ENCODE measurements at regions of chr9 and their contacts with region 1.

Region 1: DNA sequence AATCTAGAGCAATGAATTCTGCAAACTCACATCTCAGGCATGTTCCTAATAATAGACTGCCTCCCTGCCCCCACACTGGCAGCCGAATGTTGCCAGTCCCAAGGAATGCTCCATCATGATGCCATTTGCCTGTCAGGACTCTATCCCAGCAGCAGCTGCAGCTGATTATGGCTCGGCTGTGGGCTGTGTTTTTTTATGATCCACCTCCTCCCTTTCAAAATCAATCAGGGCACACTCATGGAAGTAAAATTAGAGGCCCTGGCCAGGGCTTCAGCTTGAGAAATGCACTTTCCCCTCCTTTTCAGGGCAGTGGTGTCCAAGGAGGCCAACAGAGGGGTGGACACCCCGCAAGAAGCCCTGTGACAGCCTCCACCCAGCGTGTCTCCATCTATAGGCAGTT is 176.7 kb upstream of the S1PR3 start:
- DNase-seq: no peak
- H3K4me3 ChIP-seq: no peak overlapping the region
- H3K27ac ChIP-seq: no peak overlapping the region
- H3K4me1 ChIP-seq: no peaks in the 10 kb centered on the region; the same call in 1 of the 2 replicates
- H3K27me3 ChIP-seq: no peaks in the 10 kb centered on the region
- CTCF ChIP-seq: no peak

Region 2: DNA sequence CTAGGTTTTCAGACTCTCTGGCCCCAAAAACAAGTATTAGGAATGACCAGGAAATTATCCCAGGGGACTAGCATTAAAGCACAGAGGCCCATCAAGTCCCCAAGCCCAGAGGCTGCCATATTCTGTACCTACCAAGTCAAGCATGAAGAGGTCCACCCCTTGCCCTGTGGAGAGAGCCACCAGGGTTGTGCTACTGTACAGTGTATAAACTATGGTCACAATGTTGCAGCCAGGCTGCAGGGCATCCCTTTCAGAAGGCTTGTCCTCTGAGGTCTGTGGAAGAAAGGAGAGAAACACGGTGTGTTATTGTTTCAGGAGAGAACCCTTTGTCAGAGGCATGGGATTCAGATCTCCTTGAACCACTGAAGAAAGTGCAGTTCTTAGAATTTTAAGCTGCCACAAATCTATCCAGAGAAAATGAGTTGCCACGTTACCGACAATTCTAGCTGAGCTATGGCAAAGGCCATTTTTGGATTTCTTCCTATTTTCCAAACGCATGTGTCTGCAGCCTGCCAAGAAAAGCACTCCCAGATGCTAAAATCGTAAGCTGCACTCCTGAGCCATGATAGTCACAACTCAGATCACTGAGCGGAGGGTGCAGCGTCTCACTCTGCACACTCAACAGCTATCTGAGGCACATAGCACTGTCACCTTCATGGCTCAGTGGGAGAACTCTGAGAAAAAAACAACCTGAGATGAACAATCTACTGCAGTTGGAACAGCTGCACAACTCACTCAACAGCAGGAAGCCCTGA is 977.4 kb before region 1 on chr9:
- CTCF ChIA-PET with region 1: no interaction called
- POLR2A ChIA-PET with region 1: interaction called, 12 read pairs
- intact Hi-C with region 1: no loop called
- DNase-seq: no peak
- H3K4me3 ChIP-seq: no peak overlapping the region
- H3K27ac ChIP-seq: no peak overlapping the region
- H3K4me1 ChIP-seq: no peaks in the 10 kb centered on the region
- H3K27me3 ChIP-seq: no peaks in the 10 kb centered on the region
- CTCF ChIP-seq: no peak

Region 3: DNA sequence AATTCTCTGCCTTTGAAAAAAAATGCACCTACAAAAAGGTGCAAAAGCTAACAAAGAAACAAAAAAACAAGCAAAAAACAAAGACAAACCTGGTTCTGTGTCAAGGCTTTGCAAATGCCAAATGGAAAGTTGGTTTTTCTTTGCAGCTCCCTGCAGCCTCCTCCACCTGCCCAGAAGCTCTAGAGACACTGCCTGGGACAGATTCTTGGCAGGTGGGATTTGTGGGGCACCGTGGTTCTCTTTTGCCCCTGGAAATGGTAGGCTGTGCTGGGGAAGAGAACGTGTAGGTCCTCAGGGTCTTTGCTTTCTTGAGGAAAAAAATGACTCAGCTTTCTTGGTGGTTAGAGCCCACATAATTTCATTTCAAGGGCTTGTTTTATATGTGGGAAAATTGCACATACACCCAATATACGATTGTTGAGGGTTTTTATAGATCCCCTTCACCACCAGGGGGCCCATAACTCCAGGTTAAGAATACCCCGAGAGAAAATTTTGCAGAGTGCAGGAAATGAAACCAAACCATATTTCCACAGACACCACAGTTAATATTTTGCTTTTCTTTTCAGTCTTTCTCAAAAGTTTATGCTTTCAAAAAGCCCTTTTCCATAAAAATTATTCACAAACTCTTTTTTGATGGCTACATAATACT is 220.9 kb before region 1 on chr9:
- CTCF ChIA-PET with region 1: no interaction called
- POLR2A ChIA-PET with region 1: no interaction called
- intact Hi-C with region 1: loop called (anchors 10 kb)
- DNase-seq: peak in 1 of 2 experiments; percentile 52
- H3K4me3 ChIP-seq: no peak overlapping the region
- H3K27ac ChIP-seq: no peak overlapping the region
- H3K4me1 ChIP-seq: no peaks in the 10 kb centered on the region
- H3K27me3 ChIP-seq: no peaks in the 10 kb centered on the region
- CTCF ChIP-seq: peak; percentile 86

Region 4: DNA sequence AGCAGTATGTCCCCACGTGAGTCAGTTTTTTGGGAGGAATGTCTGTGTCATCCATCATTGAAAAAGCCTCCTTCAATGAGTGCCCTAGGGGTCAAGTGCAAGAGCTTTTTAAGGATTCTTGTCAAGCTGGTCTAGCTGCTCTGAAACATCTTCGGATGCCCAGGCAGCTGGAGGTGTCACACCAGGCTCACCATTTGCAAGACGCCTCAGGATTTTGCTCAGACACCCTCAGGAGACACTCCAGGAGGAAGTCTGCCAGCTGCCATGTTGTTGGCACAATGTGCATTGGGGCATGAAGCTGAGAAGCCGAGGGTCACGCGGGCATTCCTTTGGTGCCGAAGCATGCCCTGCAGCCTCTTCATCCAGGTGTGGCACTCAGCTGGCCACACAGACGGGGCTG is 65.6 kb after region 1 on chr9:
- CTCF ChIA-PET with region 1: no interaction called
- POLR2A ChIA-PET with region 1: interaction called, 18 read pairs
- intact Hi-C with region 1: loop called (anchors 2 kb)
- DNase-seq: peak; percentile 77 to 85
- H3K4me3 ChIP-seq: no peak overlapping the region
- H3K27ac ChIP-seq: no peak overlapping the region
- H3K4me1 ChIP-seq: peaks cover 6% of the 10 kb centered on the region; the same call in 1 of the 2 replicates
- H3K27me3 ChIP-seq: no peaks in the 10 kb centered on the region
- CTCF ChIP-seq: no peak

Region 5: DNA sequence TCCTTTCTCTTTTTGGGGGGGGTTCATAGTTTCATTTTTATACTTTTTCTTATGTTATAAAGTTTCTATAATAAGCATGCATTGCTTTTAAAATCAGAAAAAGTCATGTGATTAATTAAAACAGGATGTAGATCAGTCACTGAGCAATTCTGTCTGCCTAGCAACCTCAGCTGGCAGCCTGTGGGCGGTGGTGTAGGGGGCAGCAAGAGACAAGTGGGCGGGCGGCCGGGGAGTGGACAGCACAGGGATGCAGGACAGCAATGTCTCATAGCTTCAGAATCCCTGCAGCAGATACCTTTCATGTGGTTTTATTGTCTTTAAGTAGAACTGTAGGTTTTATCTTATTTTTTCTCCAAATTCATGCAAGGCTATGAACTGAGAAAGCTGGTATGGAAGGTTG is 74.8 kb after region 1 on chr9:
- CTCF ChIA-PET with region 1: no interaction called
- POLR2A ChIA-PET with region 1: interaction called, 18 read pairs
- intact Hi-C with region 1: no loop called
- DNase-seq: no peak
- H3K4me3 ChIP-seq: no peak overlapping the region
- H3K27ac ChIP-seq: no peak overlapping the region
- H3K4me1 ChIP-seq: peaks cover 17% of the 10 kb centered on the region
- H3K27me3 ChIP-seq: no peaks in the 10 kb centered on the region
- CTCF ChIP-seq: no peak

Region 6: GRCh38 chr9:88979791-88980190 is 165.2 kb after region 1 on chr9:
- CTCF ChIA-PET with region 1: no interaction called
- POLR2A ChIA-PET with region 1: interaction called, 10 read pairs
- intact Hi-C with region 1: no loop called
- DNase-seq: no peak
- H3K4me3 ChIP-seq: no peak overlapping the region
- H3K27ac ChIP-seq: no peak overlapping the region
- H3K4me1 ChIP-seq: no peaks in the 10 kb centered on the region; the same call in 1 of the 2 replicates
- H3K27me3 ChIP-seq: no peaks in the 10 kb centered on the region
- CTCF ChIP-seq: no peak

Measured in PC-9 (cell line).